Motor neuron (in vitro differentiated cells): ENCODE measurements at regions of chr6 and their contacts with region 1.

Region 1: DNA sequence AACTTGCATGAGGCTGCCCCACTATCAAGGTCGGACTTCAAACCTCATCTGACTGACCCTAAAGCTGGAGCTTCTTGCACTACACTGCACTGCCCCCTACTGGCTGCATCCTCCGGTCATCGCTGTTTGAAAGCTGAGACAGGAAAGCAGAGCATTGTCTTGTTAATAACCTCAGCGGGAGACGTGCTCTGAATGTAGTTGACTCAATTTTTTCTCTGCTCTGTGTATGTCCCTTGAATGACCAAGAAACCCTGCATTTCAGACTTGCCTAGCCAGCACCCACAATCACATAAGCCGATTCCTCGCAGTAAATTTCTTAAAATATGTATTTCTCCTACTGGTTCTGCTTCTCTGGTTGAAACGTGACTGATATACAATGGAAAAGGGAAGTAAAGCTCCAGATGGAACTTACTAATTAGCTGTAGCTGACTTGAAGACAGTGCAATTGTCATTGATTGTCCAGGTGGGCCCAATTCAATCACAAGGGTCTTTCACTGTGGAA is 27.8 kb downstream of the TCF21 start:
- ATAC-seq: peak; percentile 86 to 97 (median 95)
- H3K4me3 ChIP-seq: no peak overlapping the region
- H3K27ac ChIP-seq: no peak overlapping the region
- H3K4me1 ChIP-seq: peaks cover 4 to 6% of the 10 kb centered on the region in 2 donors

Region 2: DNA sequence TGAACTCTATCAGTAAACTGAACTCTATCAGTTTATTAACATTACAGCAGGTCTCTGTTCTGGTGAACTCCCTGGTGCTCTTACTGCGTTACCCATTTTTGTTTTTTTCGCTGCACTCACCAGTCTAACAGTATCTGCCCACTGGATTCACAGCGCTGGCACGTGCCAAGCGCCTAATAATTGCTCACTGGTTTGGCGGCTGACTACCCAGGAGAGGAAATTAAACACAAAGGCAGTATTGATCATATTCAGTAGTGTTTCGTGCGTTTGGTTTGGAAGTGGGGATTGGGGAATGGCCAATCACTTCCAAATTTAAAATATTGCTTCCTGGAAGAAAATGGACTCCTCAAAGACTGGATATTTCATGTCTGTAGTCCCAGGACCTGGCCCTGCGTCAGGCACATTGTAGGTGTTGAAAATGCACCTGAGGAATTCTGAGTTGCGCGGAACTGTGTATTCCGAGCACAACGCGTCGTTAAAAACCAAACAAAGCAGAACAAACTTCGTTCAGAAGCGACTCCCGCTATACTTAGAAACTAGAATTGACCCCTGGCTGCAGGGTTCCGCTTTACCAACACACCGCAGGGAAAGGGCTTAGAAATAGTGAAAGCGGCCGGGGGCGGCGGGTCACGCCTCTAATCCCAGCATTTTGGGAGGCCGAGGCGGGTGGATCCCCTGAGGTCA is 1103.4 kb before region 1 on chr6:
- in situ Hi-C with region 1: loop called in 1 of 9 experiments (anchors 25 kb)
- ATAC-seq: peak in 3 of 8 experiments; percentile 6 to 10 (median 6)
- H3K4me3 ChIP-seq: peak overlapping the region; percentile 73 to 91 (median 83)
- H3K27ac ChIP-seq: peak overlapping the region; percentile 63 to 91
- H3K4me1 ChIP-seq: peaks cover 24 to 27% of the 10 kb centered on the region in 2 donors

Region 3: DNA sequence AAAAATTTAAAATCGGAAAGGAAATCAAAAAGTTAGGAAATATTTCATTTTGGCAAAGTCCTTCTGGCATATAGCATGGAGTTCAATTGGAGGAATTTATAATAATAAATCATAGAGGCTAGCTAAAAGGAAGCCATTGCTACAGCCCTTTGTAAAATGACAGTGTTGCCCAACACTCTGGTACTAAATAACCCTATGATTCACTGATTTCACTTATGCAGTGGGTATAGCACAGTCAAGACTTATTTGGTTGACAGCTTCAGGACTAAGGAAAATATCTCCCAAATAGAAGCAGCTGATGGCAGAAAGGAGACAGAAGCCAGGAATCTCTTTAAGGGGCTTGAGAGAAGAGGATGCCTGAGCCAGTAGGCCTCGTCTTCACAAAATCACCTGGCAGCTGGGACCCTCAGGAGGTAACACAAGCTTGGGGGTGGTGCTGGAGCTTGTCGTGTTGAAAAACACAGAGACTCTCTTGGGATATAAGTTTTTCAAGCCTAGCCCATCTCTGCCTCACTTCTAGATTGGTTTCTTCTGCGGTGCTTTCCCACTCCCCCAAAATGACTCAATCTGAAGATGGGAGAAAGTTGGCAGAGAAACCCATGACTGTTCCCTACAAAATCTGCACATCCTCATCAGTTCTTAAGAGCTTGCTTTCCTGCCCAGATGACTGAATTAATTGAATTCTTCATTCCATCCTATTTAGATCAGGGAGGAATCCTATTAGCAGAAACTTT is 713.9 kb before region 1 on chr6:
- in situ Hi-C with region 1: loop called in 1 of 9 experiments (anchors 25 kb)
- ATAC-seq: no peak
- H3K4me3 ChIP-seq: no peak overlapping the region
- H3K27ac ChIP-seq: no peak overlapping the region
- H3K4me1 ChIP-seq: peaks cover 0 to 4% of the 10 kb centered on the region in 2 donors

Region 4: GRCh38 chr6:133568970-133569889 is 347.5 kb before region 1 on chr6:
- in situ Hi-C with region 1: loop called in 7 of 9 experiments (anchors 5 to 25 kb)
- ATAC-seq: peak; percentile 92 to 99 (median 98)
- H3K4me3 ChIP-seq: peak overlapping the region; percentile 27 to 41 (median 33)
- H3K27ac ChIP-seq: no peak overlapping the region
- H3K4me1 ChIP-seq: peaks cover 0 to 2% of the 10 kb centered on the region in 2 donors